Naive thymus-derived CD4-positive, alpha-beta T cell (primary cell): ENCODE measurements at regions of chr21 and their contacts with region 1.

Region 1: DNA sequence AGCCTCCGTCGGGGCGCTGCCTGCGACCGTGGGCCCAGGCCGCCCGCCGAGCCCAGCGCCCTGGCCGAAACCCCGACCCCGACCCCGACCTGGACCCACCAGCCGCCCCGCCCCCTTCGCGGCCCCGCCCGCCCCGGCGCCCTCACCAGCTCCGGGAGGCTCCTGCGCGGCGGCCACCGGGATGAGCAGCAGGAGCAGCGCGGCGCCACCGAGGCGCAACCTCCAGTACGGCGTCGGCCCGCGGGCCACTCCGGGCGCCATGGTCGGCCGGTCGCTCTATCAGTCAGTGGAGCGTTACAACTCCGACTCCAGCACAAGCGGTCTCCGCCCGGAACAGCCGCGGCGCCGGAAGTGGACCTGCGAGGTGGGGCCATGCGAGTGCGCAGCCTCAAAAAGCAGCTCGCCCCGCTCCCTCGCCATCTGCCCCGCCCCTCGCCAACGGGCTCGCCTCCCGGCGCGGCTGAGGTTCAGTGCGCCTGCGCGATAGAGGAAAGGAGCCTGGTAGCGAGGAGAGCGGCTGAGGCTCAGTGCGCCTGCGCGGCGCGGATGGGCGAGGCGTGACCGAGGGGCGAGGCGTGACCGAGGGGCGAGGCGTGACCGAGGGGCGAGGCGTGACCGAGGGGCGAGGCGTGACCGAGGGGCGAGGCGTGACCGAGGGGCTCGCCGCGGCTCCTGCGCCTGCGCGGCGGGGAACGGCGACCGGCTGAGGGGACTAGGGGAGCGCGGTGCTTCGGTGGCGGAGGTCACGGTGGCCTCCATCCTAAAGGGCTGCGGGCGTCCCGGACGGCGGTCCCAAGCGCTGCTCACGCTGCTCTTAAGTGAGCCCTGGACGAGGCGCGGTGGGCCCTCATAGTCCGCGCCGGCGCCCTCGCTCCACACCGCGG is at the start of gene PTTG1IP:
- DNase-seq: peak; percentile 97 to 100 (median 99)
- ATAC-seq: peak; percentile 88
- H3K4me3 ChIP-seq: peak within 1 kb of the TSS; percentile 71
- H3K4me3 Mint-ChIP-seq: peak within 1 kb of the TSS; percentile 90 to 97 (median 96)
- H3K27ac ChIP-seq: peak within 1 kb of the TSS; percentile 81
- H3K27ac Mint-ChIP-seq: peak within 1 kb of the TSS; percentile 84 to 97 (median 92)
- H3K4me1 ChIP-seq: peaks cover 34 to 46% of the 10 kb centered on the region in 2 donors
- H3K4me1 Mint-ChIP-seq: peaks cover 31 to 56% (median 48%) of the 10 kb centered on the region in 7 donors
- H3K27me3 ChIP-seq: no peaks in the 10 kb centered on the region
- H3K27me3 Mint-ChIP-seq: no peaks in the 10 kb centered on the region
- total RNA-seq, gene PTTG1IP: 83.8 to 122 (median 95.6) TPM

Region 2: GRCh38 chr21:44338971-44339910 is 534.4 kb before region 1 on chr21 and contains the start of gene CFAP410:
- CTCF ChIA-PET with region 1: no interaction called
- POLR2A ChIA-PET with region 1: no interaction called
- intact Hi-C with region 1: loop called in 1 of 2 experiments (anchors 1 kb)
- DNase-seq: peak; percentile 94 to 97 (median 97)
- ATAC-seq: peak; percentile 92
- H3K4me3 ChIP-seq: peak within 1 kb of the TSS; percentile 97
- H3K4me3 Mint-ChIP-seq: peak within 1 kb of the TSS; percentile 85 to 95 (median 92)
- H3K27ac ChIP-seq: peak within 1 kb of the TSS; percentile 96
- H3K27ac Mint-ChIP-seq: peak within 1 kb of the TSS; percentile 95 to 100 (median 97)
- H3K4me1 ChIP-seq: peaks cover 10 to 15% of the 10 kb centered on the region in 2 donors
- H3K4me1 Mint-ChIP-seq: peaks cover 4 to 33% (median 24%) of the 10 kb centered on the region in 7 donors
- H3K27me3 ChIP-seq: no peaks in the 10 kb centered on the region
- H3K27me3 Mint-ChIP-seq: no peaks in the 10 kb centered on the region
- total RNA-seq, gene CFAP410: 20.8 to 66.7 (median 49.5) TPM

Region 3: GRCh38 chr21:44713130-44713529 is 160.5 kb before region 1 on chr21:
- CTCF ChIA-PET with region 1: no interaction called
- POLR2A ChIA-PET with region 1: no interaction called
- intact Hi-C with region 1: no loop called
- DNase-seq: no peak
- ATAC-seq: no peak
- H3K4me3 ChIP-seq: no peak overlapping the region
- H3K4me3 Mint-ChIP-seq: no peak overlapping the region
- H3K27ac ChIP-seq: no peak overlapping the region
- H3K27ac Mint-ChIP-seq: no peak overlapping the region
- H3K4me1 ChIP-seq: peaks cover 25 to 34% of the 10 kb centered on the region in 2 donors
- H3K4me1 Mint-ChIP-seq: peaks cover 13 to 47% (median 27%) of the 10 kb centered on the region in 7 donors
- H3K27me3 ChIP-seq: peaks cover 8 to 26% of the 10 kb centered on the region in 2 donors
- H3K27me3 Mint-ChIP-seq: peaks cover 54 to 91% (median 64%) of the 10 kb centered on the region in 5 donors

Region 4: GRCh38 chr21:44752634-44753291 is 120.8 kb before region 1 on chr21:
- CTCF ChIA-PET with region 1: no interaction called
- POLR2A ChIA-PET with region 1: no interaction called
- intact Hi-C with region 1: no loop called
- DNase-seq: no peak
- ATAC-seq: no peak
- H3K4me3 ChIP-seq: no peak overlapping the region
- H3K4me3 Mint-ChIP-seq: no peak overlapping the region
- H3K27ac ChIP-seq: no peak overlapping the region
- H3K27ac Mint-ChIP-seq: peak overlapping the region in 1 of 9 donors; percentile 41
- H3K4me1 ChIP-seq: no peaks in the 10 kb centered on the region
- H3K4me1 Mint-ChIP-seq: peaks cover 0 to 2% (median 0%) of the 10 kb centered on the region in 7 donors
- H3K27me3 ChIP-seq: no peaks in the 10 kb centered on the region
- H3K27me3 Mint-ChIP-seq: peaks cover 4 to 10% (median 6%) of the 10 kb centered on the region in 5 donors

Region 5: GRCh38 chr21:44801468-44802395 is 71.9 kb before region 1 on chr21 and contains the start of gene UBE2G2:
- CTCF ChIA-PET with region 1: interaction called, 56 read pairs
- POLR2A ChIA-PET with region 1: interaction called, 21 read pairs
- intact Hi-C with region 1: loop called (anchors 1 kb)
- DNase-seq: peak; percentile 79 to 95 (median 88)
- ATAC-seq: peak; percentile 95
- H3K4me3 ChIP-seq: peak within 1 kb of the TSS; percentile 92
- H3K4me3 Mint-ChIP-seq: peak within 1 kb of the TSS; percentile 88 to 100 (median 96)
- H3K27ac ChIP-seq: peak within 1 kb of the TSS; percentile 85
- H3K27ac Mint-ChIP-seq: peak within 1 kb of the TSS; percentile 85 to 99 (median 94)
- H3K4me1 ChIP-seq: peaks cover 19 to 27% of the 10 kb centered on the region in 2 donors
- H3K4me1 Mint-ChIP-seq: peaks cover 24 to 53% (median 45%) of the 10 kb centered on the region in 7 donors
- H3K27me3 ChIP-seq: no peaks in the 10 kb centered on the region
- H3K27me3 Mint-ChIP-seq: no peaks in the 10 kb centered on the region
- total RNA-seq, gene UBE2G2: 108 to 150 (median 129) TPM

Region 6: GRCh38 chr21:44911389-44912157 is 38.0 kb after region 1 on chr21:
- CTCF ChIA-PET with region 1: interaction called, 7 read pairs
- POLR2A ChIA-PET with region 1: interaction called, 34 read pairs
- intact Hi-C with region 1: loop called (anchors 1 to 2 kb)
- DNase-seq: peak; percentile 47 to 82 (median 78)
- ATAC-seq: peak; percentile 76
- H3K4me3 ChIP-seq: peak overlapping the region; percentile 49
- H3K4me3 Mint-ChIP-seq: peak overlapping the region; percentile 67 to 91 (median 82)
- H3K27ac ChIP-seq: peak overlapping the region; percentile 80
- H3K27ac Mint-ChIP-seq: peak overlapping the region; percentile 74 to 98 (median 93)
- H3K4me1 ChIP-seq: peaks cover 59 to 83% of the 10 kb centered on the region in 2 donors
- H3K4me1 Mint-ChIP-seq: peaks cover 53 to 86% (median 64%) of the 10 kb centered on the region in 7 donors
- H3K27me3 ChIP-seq: no peaks in the 10 kb centered on the region
- H3K27me3 Mint-ChIP-seq: no peaks in the 10 kb centered on the region

Region 7: GRCh38 chr21:45074048-45074817 is 200.6 kb after region 1 on chr21 and contains the start of gene ADARB1:
- CTCF ChIA-PET with region 1: no interaction called
- POLR2A ChIA-PET with region 1: interaction called, 7 read pairs
- intact Hi-C with region 1: loop called in 1 of 2 experiments (anchors 5 kb)
- DNase-seq: peak; percentile 50 to 82 (median 69)
- ATAC-seq: peak; percentile 84
- H3K4me3 ChIP-seq: peak within 1 kb of the TSS; percentile 65
- H3K4me3 Mint-ChIP-seq: peak within 1 kb of the TSS; percentile 91 to 100 (median 96)
- H3K27ac ChIP-seq: peak within 1 kb of the TSS; percentile 87
- H3K27ac Mint-ChIP-seq: peak within 1 kb of the TSS; percentile 86 to 98 (median 94)
- H3K4me1 ChIP-seq: peaks cover 31 to 34% of the 10 kb centered on the region in 2 donors
- H3K4me1 Mint-ChIP-seq: peaks cover 31 to 45% (median 41%) of the 10 kb centered on the region in 7 donors
- H3K27me3 ChIP-seq: no peaks in the 10 kb centered on the region
- H3K27me3 Mint-ChIP-seq: no peaks in the 10 kb centered on the region
- total RNA-seq, gene ADARB1: 35.7 to 52.2 (median 38.9) TPM